Posterior vena cava (tissue), 2 donors: ENCODE measurements at regions of chr18 and their contacts with region 1.

Region 1: GRCh38 chr18:50158923-50159653 is 35.9 kb downstream of the MYO5B start:
- DNase-seq: no peak

Region 2: GRCh38 chr18:49949951-49950395 is 209.1 kb before region 1 on chr18:
- intact Hi-C with region 1: no loop called
- DNase-seq: no peak

Region 3: GRCh38 chr18:50099725-50100407 is 59.2 kb before region 1 on chr18:
- intact Hi-C with region 1: no loop called
- DNase-seq: no peak

Region 4: DNA sequence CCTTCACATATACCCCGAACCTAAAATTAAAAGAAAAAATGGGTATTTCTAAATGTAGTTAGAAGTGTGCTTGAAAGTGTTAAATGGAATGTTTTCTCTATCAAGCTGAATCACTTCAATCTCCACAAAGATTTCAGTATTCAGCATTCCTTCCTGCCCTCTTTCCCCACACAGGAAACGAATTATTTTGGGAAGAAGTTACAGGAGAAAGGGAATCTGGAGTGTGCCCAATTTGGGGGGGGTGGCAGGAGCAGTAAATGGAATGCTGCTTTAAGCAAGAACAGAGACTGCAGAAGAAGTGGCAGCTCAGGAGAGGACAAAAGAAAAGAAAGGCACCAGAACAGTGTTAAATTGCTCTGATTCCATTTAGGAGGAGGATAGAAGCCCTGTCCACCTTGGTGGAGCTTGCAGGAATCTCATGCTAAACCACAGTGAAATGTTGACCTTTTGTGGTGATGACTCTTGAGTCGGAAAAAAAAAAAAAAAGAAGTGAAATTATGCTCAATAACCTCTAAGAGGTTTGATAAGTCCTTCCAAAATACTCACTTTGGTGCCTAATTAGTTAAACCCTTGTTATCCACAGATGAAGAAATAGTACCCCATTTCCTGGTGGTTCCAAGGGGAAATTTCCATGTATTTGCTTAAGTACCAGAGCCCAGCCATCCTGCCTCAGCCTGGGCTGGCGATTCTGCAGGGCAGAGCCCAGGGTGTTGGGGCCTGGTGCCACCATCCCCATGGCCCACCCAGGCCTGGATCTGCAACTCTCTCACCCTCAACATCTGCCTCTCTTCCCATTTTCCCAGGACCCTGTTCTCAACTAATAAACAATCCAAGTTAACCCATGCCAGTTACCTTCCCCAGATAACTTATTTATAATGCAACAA is 20.7 kb before region 1 on chr18:
- intact Hi-C with region 1: no loop called
- DNase-seq: no peak

Region 5: GRCh38 chr18:51915176-51915575 is 1756.1 kb after region 1 on chr18:
- intact Hi-C with region 1: loop called in 1 of 2 experiments (anchors 5 kb)
- DNase-seq: no peak